ENCODE measurements at regions of chr22 and their contacts with region 1.

Region 1: GRCh38 chr22:30754971-30755756 is 60.5 kb downstream of the OSBP2 start:
- DNase-seq: peak; percentile 65
- ATAC-seq: peak; percentile 58
- H3K4me3 Mint-ChIP-seq: no peak overlapping the region
- H3K27ac Mint-ChIP-seq: no peak overlapping the region
- H3K4me1 Mint-ChIP-seq: no peaks in the 10 kb centered on the region
- H3K27me3 Mint-ChIP-seq: peaks cover 1% of the 10 kb centered on the region

Region 2: GRCh38 chr22:30667494-30668385 is 87.4 kb before region 1 on chr22 and contains the start of gene DUSP18:
- CTCF ChIA-PET with region 1: interaction called, 11 read pairs
- POLR2A ChIA-PET with region 1: no interaction called
- DNase-seq: peak; percentile 95
- ATAC-seq: peak; percentile 95
- H3K4me3 Mint-ChIP-seq: peak within 1 kb of the TSS; percentile 90
- H3K27ac Mint-ChIP-seq: peak within 1 kb of the TSS; percentile 83
- H3K4me1 Mint-ChIP-seq: peaks cover 15% of the 10 kb centered on the region
- H3K27me3 Mint-ChIP-seq: peaks cover 3% of the 10 kb centered on the region
- total RNA-seq, gene DUSP18: 7.0 to 7.6 TPM

Region 3: GRCh38 chr22:30742291-30743256 is 12.6 kb before region 1 on chr22:
- CTCF ChIA-PET with region 1: interaction called, 16 read pairs
- POLR2A ChIA-PET with region 1: interaction called, 4 read pairs
- DNase-seq: no peak
- ATAC-seq: no peak
- H3K4me3 Mint-ChIP-seq: no peak overlapping the region
- H3K27ac Mint-ChIP-seq: peak overlapping the region; percentile 30
- H3K4me1 Mint-ChIP-seq: peaks cover 40% of the 10 kb centered on the region
- H3K27me3 Mint-ChIP-seq: no peaks in the 10 kb centered on the region